Heart right ventricle (tissue), 16 donors: ENCODE measurements at regions of chr18 and their contacts with region 1.

Region 1: DNA sequence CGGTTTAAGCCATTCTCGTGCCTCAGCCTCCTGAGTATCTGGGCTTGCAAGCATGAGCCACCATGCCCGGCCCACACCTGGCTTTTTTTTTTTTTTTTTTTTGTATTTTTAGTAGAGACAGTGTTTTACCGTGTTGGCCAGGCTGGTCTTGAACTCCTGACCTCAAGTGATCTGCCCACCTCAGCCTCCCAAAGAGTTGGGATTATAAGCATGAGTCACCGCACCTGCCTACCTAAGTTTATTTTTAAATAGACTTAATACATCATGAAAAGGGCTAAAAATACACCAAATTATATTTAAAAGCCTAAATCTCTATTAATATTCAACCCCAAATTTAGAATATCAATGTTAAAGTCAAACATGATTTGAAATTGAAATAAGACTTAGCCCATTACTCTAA is 250.8 kb upstream of the MC4R start:
- DNase-seq: no peak
- ATAC-seq: no peak
- H3K4me3 ChIP-seq: no peak overlapping the region
- H3K27ac ChIP-seq: no peak overlapping the region
- H3K4me1 ChIP-seq: no peaks in the 10 kb centered on the region
- H3K27me3 ChIP-seq: no peaks in the 10 kb centered on the region
- CTCF ChIP-seq: no peak

Region 2: DNA sequence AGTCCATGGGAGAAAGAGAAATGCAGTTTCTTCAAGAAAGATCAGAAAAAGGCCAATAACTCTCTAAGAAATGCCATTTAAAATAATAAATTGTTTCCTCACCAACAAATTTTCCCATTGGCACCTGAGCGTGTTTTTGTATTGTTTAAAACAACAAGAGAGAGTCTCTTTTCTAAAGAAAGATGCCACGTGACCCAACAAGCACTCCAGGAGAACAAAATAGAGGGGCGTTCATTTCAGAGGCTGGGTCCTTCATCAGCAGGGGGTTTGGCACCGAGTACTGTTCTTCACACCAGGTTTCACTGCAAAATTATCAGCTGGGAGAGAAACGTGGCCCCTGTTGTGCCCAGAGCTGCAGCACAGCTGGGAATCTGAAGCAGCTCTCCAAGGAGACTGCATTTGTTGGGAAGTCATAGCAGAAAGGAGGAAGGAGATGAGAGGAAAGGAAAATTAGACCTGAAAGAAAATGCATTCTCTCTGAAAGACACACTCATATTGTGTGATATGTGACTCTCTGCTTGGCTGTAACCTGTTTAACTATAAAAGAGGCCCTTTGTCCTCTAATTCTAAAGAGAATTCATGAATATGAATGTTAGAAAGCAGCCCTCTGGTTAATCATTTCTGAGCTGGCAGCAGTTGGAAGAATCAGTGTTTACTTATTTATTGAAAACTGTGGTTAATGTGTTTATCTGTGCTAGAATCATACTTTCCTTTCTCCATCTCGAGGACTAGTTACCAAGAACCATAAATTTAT is 504.6 kb after region 1 on chr18:
- intact Hi-C with region 1: no loop called
- DNase-seq: no peak
- ATAC-seq: no peak
- H3K4me3 ChIP-seq: no peak overlapping the region
- H3K27ac ChIP-seq: no peak overlapping the region
- H3K4me1 ChIP-seq: no peaks in the 10 kb centered on the region
- H3K27me3 ChIP-seq: no peaks in the 10 kb centered on the region
- CTCF ChIP-seq: no peak

Region 3: GRCh38 chr18:61388010-61388409 is 764.7 kb after region 1 on chr18:
- intact Hi-C with region 1: loop called in 1 of 10 experiments (anchors 10 kb)
- DNase-seq: no peak
- ATAC-seq: peak in 1 of 8 donors; percentile 9
- H3K4me3 ChIP-seq: no peak overlapping the region
- H3K27ac ChIP-seq: no peak overlapping the region
- H3K4me1 ChIP-seq: no peaks in the 10 kb centered on the region
- H3K27me3 ChIP-seq: no peaks in the 10 kb centered on the region
- CTCF ChIP-seq: no peak